ENCODE measurements at regions of chr10 and their contacts with region 1.

Region 1: DNA sequence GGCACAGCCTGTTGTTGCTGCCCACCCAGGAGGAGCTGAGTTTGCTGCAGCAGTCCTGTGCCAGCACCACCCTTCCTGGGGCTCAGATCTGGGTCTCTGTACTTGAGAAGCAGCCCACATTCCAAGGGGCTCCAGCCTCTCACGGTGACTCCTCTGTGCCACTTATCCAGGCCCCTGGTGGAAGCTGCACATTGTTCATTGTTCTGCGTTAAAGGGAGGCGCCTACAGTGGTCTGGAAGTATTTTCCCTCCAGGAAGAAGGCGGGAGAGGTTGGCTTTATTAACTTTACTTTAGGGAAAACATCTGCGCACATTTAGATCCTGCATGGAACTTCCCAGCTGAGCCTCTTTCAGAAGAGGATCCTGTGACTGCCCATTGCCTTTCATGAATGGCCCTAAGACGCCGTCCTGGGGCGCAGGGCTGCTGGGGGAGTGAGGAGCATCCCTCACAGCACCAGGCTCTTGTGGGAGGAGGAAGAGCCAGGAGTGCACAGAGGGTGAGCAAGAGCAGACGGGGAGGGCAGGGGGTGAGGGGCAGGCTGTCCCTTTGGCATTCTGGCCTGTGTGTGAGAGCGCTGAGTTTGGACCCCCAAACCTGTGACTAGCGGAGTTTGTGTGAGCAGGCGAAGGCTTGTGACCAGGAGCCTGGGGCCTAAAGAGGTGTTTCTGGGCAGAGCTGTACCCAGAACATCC is 98.6 kb upstream of the BTBD16 start:
- DNase-seq: no peak
- H3K4me3 ChIP-seq: no peak overlapping the region
- H3K27ac ChIP-seq: peak overlapping the region; percentile 15
- H3K4me1 ChIP-seq: peaks cover 33% of the 10 kb centered on the region
- H3K27me3 ChIP-seq: no peaks in the 10 kb centered on the region
- CTCF ChIP-seq: no peak
- POLR2A ChIP-seq: no peak

Region 2: GRCh38 chr10:122051251-122051996 is 121.0 kb before region 1 on chr10:
- intact Hi-C with region 1: loop called (anchors 10 kb)
- DNase-seq: no peak
- H3K4me3 ChIP-seq: no peak overlapping the region
- H3K27ac ChIP-seq: peak overlapping the region; percentile 48
- H3K4me1 ChIP-seq: peaks cover 35% of the 10 kb centered on the region
- H3K27me3 ChIP-seq: no peaks in the 10 kb centered on the region
- CTCF ChIP-seq: peak in 2 of 3 experiments; percentile 31 to 40
- POLR2A ChIP-seq: no peak